ENCODE measurements at regions of chr1 and their contacts with region 1.

Region 1: DNA sequence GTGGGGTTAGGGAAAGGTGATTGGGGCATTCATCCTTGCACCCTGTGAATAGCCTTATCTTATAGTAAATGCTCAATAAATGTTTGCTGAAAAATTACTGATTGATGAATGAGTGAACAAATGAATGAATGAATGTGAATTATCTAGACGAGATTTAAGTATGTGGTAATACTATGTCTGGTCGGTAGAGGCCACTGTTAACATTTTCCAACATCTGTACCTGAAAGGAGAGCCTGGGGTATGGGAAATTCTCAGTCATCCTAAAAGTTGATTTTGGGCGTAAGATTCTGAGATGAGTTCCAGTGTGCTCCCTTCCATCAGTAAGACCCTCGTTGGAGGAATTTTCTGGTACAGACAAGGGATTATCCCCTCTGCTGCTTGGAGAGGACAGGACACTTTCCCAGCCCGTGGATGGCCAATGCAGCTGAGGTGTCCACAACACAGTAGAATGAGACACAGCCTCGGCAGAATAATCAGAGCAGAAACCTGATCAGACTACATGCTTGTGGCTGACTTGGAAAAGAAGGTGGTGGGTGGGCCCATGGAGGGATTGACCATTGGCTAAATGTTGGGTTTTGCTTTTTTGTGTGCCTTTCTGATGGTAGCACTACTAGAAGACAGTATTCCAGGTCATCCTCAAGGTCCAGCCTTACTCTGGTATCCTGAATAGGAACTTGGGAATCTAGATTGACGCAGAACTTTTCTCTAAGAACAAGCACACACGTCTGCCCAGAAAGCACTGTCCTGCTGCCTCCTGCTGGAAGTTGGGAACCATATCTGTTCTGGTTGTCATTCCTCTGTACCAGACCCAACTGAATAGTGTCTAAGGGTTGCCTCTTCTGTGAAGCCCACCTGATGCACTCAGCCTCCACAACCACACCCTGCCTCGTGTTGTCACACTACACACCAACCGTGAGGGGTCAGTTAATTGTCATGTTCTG is 262.0 kb downstream of the TNR start:
- DNase-seq: peak; percentile 43
- H3K4me3 ChIP-seq: no peak overlapping the region
- H3K27ac ChIP-seq: no peak overlapping the region
- H3K4me1 ChIP-seq: no peaks in the 10 kb centered on the region
- CTCF ChIP-seq: peak; percentile 86

Region 2: DNA sequence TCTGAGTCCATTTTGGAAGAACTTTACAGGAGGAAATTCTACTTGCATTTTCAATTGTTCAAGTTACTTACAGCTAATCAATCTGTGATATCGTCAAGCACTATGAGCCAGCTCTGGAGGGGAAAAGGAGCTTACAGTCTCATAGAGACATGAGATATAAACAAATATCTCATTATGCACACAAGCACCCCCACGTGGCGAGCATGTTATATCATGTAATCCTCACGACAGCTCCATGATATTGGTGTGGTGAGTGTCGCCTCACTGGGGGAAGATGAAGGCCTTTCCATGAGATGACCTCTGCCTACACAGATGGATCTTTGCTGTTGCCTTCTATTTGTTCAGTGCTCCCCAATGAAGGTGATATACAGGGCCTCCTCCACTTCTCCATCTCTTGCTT is 227.4 kb after region 1 on chr1:
- CTCF ChIA-PET with region 1: no interaction called
- POLR2A ChIA-PET with region 1: no interaction called
- intact Hi-C with region 1: loop called (anchors 2 kb)
- DNase-seq: peak; percentile 68
- H3K4me3 ChIP-seq: no peak overlapping the region
- H3K27ac ChIP-seq: no peak overlapping the region
- H3K4me1 ChIP-seq: no peaks in the 10 kb centered on the region
- CTCF ChIP-seq: peak; percentile 73

Region 3: DNA sequence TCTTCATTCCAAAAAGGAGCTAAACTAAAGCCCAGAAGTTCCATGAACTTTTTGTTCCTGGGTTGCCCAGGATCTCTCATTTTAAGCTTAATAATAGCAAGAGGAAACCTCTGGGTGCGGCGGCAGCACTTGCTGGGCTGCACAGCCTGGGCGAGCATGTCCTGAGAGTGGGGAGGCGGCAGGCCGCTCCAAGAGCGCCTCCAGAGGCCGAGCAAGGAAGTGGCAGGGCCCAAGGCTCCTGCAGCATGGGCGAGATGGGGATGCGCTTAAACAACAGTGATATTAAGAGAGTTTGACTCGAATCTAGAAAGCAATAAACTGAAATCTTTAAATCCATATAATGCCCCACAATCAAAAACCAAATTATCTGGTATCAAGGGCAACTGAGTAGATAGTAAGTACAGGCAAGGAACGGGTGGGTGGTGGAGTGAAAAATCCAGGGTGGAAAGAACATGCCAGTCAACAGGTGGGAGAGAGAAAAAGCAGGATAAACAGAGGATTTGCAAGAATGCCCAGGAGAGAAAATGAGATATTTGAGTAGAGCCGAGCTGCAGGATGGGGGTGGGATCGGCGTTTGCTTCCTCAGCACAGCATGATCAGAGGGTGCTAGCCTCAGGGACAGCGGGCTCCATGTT is 276.1 kb after region 1 on chr1:
- CTCF ChIA-PET with region 1: no interaction called
- POLR2A ChIA-PET with region 1: no interaction called
- intact Hi-C with region 1: loop called (anchors 5 kb)
- DNase-seq: peak; percentile 63
- H3K4me3 ChIP-seq: no peak overlapping the region
- H3K27ac ChIP-seq: no peak overlapping the region
- H3K4me1 ChIP-seq: no peaks in the 10 kb centered on the region
- CTCF ChIP-seq: peak; percentile 98

Region 4: DNA sequence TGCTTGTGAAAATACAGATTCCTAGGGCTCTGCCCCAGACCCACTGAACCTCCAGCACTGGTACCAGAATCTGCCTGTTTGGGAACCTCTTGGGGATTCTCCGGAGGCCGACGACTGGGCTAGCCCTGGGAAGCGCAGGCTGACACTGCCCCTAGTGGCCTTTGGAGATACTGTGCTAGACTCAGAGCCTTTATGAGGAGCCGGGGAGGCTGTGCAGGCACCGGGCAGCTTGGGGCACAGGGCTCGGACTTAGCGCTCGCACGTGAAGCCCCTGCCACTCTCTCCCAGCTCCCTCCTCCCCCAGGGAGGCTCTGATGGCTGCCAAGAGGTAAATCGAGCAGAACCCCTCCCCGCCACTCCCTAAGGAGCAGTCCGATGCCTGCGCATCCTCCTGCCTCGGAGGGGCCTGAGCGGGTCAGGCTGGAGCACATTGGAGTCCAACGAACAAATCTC is 406.6 kb after region 1 on chr1:
- CTCF ChIA-PET with region 1: no interaction called
- POLR2A ChIA-PET with region 1: no interaction called
- intact Hi-C with region 1: loop called (anchors 5 kb)
- DNase-seq: peak; percentile 30
- H3K4me3 ChIP-seq: no peak overlapping the region
- H3K27ac ChIP-seq: no peak overlapping the region
- H3K4me1 ChIP-seq: no peaks in the 10 kb centered on the region
- CTCF ChIP-seq: peak; percentile 80

Region 5: GRCh38 chr1:176073524-176074157 is 592.2 kb after region 1 on chr1:
- CTCF ChIA-PET with region 1: no interaction called
- POLR2A ChIA-PET with region 1: no interaction called
- intact Hi-C with region 1: loop called (anchors 10 kb)
- DNase-seq: peak; percentile 77
- H3K4me3 ChIP-seq: no peak overlapping the region
- H3K27ac ChIP-seq: no peak overlapping the region
- H3K4me1 ChIP-seq: no peaks in the 10 kb centered on the region
- CTCF ChIP-seq: peak; percentile 90